GM12878 (cell line): ENCODE measurements at regions of chr17 and their contacts with region 1.

Region 1: GRCh38 chr17:28644985-28645939 is at the start of gene BLTP2:
- DNase-seq: peak; percentile 82
- ATAC-seq: peak; percentile 97
- H3K4me3 ChIP-seq: peak within 1 kb of the TSS; percentile 85
- H3K27ac ChIP-seq: peak within 1 kb of the TSS; percentile 85
- H3K4me1 ChIP-seq: peaks cover 14% of the 10 kb centered on the region
- H3K27me3 ChIP-seq: no peaks in the 10 kb centered on the region
- CTCF ChIP-seq: no peak
- EP300 ChIP-seq: no peak
- POLR2A ChIP-seq: peak; percentile 86
- RAD21 ChIP-seq: no peak
- polyA plus RNA-seq, gene BLTP2: 14.2 to 16.9 TPM

Region 2: GRCh38 chr17:28227316-28228125 is 417.7 kb before region 1 on chr17:
- CTCF ChIA-PET with region 1: no interaction called
- POLR2A ChIA-PET with region 1: no interaction called
- RAD21 ChIA-PET with region 1: no interaction called
- SMC1A ChIA-PET with region 1: no interaction called
- in situ Hi-C with region 1: no loop called
- intact Hi-C with region 1: no loop called
- DNase-seq: no peak
- ATAC-seq: peak; percentile 58
- H3K4me3 ChIP-seq: no peak overlapping the region
- H3K27ac ChIP-seq: no peak overlapping the region
- H3K4me1 ChIP-seq: no peaks in the 10 kb centered on the region
- H3K27me3 ChIP-seq: peaks cover 0 to 9% of the 10 kb centered on the region in 2 experiments; a peak in 1 of 4 replicates
- CTCF ChIP-seq: no peak
- EP300 ChIP-seq: no peak
- POLR2A ChIP-seq: no peak
- RAD21 ChIP-seq: no peak

Region 3: GRCh38 chr17:28576758-28577465 is 68.3 kb before region 1 on chr17 and contains the start of gene ALDOC:
- CTCF ChIA-PET with region 1: interaction called, 4 read pairs
- POLR2A ChIA-PET with region 1: interaction called, 25 read pairs
- RAD21 ChIA-PET with region 1: interaction called, 7 read pairs
- SMC1A ChIA-PET with region 1: interaction called, 4 read pairs
- in situ Hi-C with region 1: no loop called
- intact Hi-C with region 1: no loop called
- DNase-seq: peak; percentile 88
- ATAC-seq: peak; percentile 97
- H3K4me3 ChIP-seq: peak within 1 kb of the TSS; percentile 66
- H3K27ac ChIP-seq: peak within 1 kb of the TSS; percentile 46
- H3K4me1 ChIP-seq: peaks cover 29% of the 10 kb centered on the region
- H3K27me3 ChIP-seq: no peaks in the 10 kb centered on the region
- CTCF ChIP-seq: no peak
- EP300 ChIP-seq: no peak
- POLR2A ChIP-seq: peak; percentile 82
- RAD21 ChIP-seq: no peak
- polyA plus RNA-seq, gene ALDOC: 66.6 to 107 TPM

Region 4: DNA sequence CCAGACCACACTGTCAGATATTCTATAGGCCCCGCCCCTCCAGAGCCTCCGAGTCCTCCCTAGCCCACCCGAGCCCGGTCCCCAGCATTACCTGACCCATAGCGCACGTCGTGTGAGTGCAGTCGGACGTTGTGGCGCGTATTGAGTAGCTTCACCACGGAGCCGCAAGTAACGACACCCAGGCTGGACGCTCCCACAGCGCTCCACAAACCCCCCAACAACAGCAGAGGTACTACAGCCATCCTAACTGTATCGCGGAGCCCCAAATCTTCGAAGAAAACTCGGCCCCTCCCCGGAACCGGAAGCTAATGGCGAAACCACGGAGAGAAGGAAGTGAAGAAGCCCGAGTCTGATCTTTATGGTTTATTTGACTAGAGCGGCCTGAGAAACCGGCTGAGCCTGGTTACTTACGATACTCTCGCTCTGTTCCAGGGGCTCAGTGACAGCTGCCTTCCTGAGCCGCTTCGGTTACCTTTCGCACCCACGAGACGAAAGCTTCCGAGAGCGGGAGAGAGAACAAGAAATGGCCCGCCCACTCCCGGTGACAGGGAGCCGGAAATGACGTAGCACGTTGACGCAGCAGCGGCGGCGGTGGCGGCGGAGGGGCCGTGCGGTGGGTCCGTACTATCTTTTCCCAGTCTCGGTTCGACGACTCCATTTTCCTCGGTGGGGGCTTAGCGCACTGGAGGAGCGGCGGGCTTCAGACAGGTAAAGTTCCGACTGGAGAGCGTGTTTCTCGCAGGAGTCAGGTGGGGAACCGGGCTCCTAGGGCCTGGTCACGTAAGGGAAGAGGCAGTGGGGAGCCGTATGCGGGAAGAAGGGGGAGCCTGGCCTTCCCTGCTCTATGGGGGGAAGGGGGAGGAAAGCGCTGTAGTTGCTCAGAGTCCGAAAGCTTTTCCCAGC is 16.6 kb after region 1 on chr17 and contains the starts of genes SDF2 and SUPT6H:
- CTCF ChIA-PET with region 1: interaction called, 84 read pairs
- POLR2A ChIA-PET with region 1: interaction called, 46 read pairs
- RAD21 ChIA-PET with region 1: interaction called, 18 read pairs
- SMC1A ChIA-PET with region 1: interaction called, 15 read pairs
- in situ Hi-C with region 1: no loop called
- intact Hi-C with region 1: no loop called
- DNase-seq: peak; percentile 72
- ATAC-seq: peak; percentile 89
- H3K4me3 ChIP-seq: peak within 1 kb of the TSS; percentile 98
- H3K27ac ChIP-seq: peak within 1 kb of the TSS; percentile 100
- H3K4me1 ChIP-seq: peaks cover 3% of the 10 kb centered on the region; the same call in 1 of the 2 replicates
- H3K27me3 ChIP-seq: no peaks in the 10 kb centered on the region
- CTCF ChIP-seq: 0 out of 6 replicates have a peak, but pooled peaks of 1 of the 3 experiments have one; percentile 16
- EP300 ChIP-seq: peak in 1 of 2 experiments; percentile 17; a peak in 1 of 4 replicates
- POLR2A ChIP-seq: peak; percentile 83
- RAD21 ChIP-seq: no peak
- polyA plus RNA-seq, gene SDF2: 72.7 to 81.0 TPM
- polyA plus RNA-seq, gene SUPT6H: 1.7 to 2.4 TPM

Region 5: DNA sequence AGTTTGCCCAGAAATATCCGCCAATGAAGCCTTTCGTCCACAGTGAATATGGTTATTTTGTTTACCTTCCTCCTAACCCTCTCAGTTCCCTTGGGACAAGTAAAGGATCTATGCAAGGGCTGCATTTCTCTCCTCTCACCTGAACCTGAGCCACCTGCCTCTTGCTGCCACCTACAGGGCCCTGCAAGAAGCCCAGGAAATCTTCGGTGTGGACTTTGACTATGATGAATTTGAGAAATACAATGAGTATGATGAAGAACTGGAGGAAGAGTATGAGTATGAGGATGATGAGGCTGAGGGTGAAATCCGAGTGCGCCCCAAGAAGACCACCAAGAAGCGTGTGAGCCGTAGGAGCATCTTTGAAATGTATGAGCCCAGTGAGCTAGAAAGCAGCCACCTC is 30.7 kb after region 1 on chr17:
- CTCF ChIA-PET with region 1: interaction called, 56 read pairs
- POLR2A ChIA-PET with region 1: interaction called, 7 read pairs
- RAD21 ChIA-PET with region 1: interaction called, 11 read pairs
- SMC1A ChIA-PET with region 1: interaction called, 9 read pairs
- in situ Hi-C with region 1: no loop called
- intact Hi-C with region 1: loop called (anchors 1 kb)
- DNase-seq: no peak
- ATAC-seq: peak; percentile 65
- H3K4me3 ChIP-seq: no peak overlapping the region
- H3K27ac ChIP-seq: no peak overlapping the region
- H3K4me1 ChIP-seq: no peaks in the 10 kb centered on the region
- H3K27me3 ChIP-seq: no peaks in the 10 kb centered on the region
- CTCF ChIP-seq: peak; percentile 45 to 56 (median 49)
- EP300 ChIP-seq: no peak
- POLR2A ChIP-seq: no peak
- RAD21 ChIP-seq: peak; percentile 56

Region 6: GRCh38 chr17:28717578-28718333 is 72.5 kb after region 1 on chr17 and contains the start of gene RAB34:
- CTCF ChIA-PET with region 1: interaction called, 18 read pairs
- POLR2A ChIA-PET with region 1: interaction called, 22 read pairs
- RAD21 ChIA-PET with region 1: interaction called, 4 read pairs
- SMC1A ChIA-PET with region 1: interaction called, 7 read pairs
- in situ Hi-C with region 1: no loop called
- intact Hi-C with region 1: no loop called
- DNase-seq: no peak
- ATAC-seq: peak; percentile 31
- H3K4me3 ChIP-seq: peak within 1 kb of the TSS; percentile 55
- H3K27ac ChIP-seq: peak within 1 kb of the TSS; percentile 39
- H3K4me1 ChIP-seq: peaks cover 11% of the 10 kb centered on the region
- H3K27me3 ChIP-seq: no peaks in the 10 kb centered on the region
- CTCF ChIP-seq: peak in 2 of 3 experiments; percentile 15 to 32; a peak in 2 of 6 replicates
- EP300 ChIP-seq: no peak
- POLR2A ChIP-seq: peak; percentile 11; the same call in 1 of the 2 replicates
- RAD21 ChIP-seq: no peak
- polyA plus RNA-seq, gene RAB34: 14.4 to 32.6 TPM

Region 7: DNA sequence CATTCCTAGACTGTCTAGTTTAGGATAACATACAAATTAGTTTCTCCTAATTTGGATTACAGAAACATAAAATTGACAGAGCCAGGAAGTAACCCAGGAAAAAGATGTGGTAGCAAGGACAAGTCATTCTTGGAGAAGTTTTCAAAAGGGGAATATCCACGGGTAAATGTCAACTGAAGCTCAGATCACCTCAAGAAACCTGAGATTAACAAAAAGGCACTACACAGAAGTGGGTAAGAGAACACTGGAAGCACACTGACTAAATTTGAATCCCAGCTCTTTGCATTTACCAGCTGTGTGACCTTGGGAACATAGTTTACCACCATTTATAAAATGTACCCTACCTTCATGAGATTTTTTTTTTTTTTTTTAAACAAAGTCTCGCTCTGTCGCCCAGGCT is 137.9 kb after region 1 on chr17:
- CTCF ChIA-PET with region 1: no interaction called
- POLR2A ChIA-PET with region 1: no interaction called
- RAD21 ChIA-PET with region 1: no interaction called
- SMC1A ChIA-PET with region 1: no interaction called
- in situ Hi-C with region 1: no loop called
- intact Hi-C with region 1: no loop called
- DNase-seq: no peak
- ATAC-seq: no peak
- H3K4me3 ChIP-seq: no peak overlapping the region
- H3K27ac ChIP-seq: no peak overlapping the region
- H3K4me1 ChIP-seq: no peaks in the 10 kb centered on the region
- H3K27me3 ChIP-seq: no peaks in the 10 kb centered on the region
- CTCF ChIP-seq: no peak
- EP300 ChIP-seq: no peak
- POLR2A ChIP-seq: no peak
- RAD21 ChIP-seq: no peak